ENCODE measurements at regions of chr6 and their contacts with region 1.

Region 1: GRCh38 chr6:156752666-156753301 is 24.4 kb upstream of the ARID1B start:
- DNase-seq: peak in 1 of 2 experiments; percentile 57
- H3K4me3 ChIP-seq: no peak overlapping the region
- H3K27ac ChIP-seq: no peak overlapping the region
- H3K4me1 ChIP-seq: peaks cover 0 to 3% (median 0%) of the 10 kb centered on the region in 4 experiments; a peak in 2 of 7 replicates
- H3K27me3 ChIP-seq: no peaks in the 10 kb centered on the region
- CTCF ChIP-seq: peak; percentile 54 to 77 (median 71)
- EP300 ChIP-seq: no peak
- POLR2A ChIP-seq: no peak
- RAD21 ChIP-seq: peak; percentile 52 to 67

Region 2: DNA sequence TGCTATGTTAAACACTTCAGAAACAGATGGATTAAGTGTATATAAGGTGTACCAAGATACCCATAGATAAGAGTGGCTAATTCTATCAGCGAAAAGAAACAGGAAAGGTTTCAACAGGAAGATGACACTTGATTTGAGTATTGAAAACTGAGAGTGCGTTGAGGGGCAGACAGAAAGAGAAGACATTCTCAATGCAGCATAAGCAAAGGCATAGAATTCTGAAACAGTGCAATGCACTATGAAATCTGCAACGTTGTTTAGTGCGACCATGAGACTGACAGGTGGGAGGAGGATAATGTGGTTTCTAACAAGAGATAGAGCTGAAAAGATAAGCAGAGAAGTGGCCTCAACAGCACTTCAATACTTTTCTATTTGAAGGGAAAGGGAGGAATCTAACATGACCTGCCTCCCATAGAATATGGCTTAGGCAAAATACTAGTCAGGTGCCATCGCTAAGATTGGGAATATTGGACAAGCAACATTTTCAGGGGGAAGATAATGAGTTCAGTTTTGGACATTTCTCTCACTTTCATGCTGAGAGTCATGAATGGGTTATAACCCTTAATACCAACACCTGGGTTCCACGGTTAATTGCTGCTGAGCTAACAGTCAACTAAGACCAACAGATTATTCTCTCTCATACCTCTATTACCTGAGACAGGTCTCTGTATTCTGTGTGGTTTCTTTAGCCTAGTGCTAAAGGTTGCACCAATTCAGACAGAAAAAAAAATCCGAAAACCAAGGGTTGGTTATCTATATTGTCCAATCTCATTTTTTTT is 288.5 kb before region 1 on chr6:
- CTCF ChIA-PET with region 1: no interaction called
- POLR2A ChIA-PET with region 1: no interaction called
- DNase-seq: no peak
- H3K4me3 ChIP-seq: no peak overlapping the region
- H3K27ac ChIP-seq: no peak overlapping the region
- H3K4me1 ChIP-seq: no peaks in the 10 kb centered on the region
- H3K27me3 ChIP-seq: no peaks in the 10 kb centered on the region
- CTCF ChIP-seq: no peak
- EP300 ChIP-seq: no peak
- POLR2A ChIP-seq: no peak
- RAD21 ChIP-seq: no peak

Region 3: DNA sequence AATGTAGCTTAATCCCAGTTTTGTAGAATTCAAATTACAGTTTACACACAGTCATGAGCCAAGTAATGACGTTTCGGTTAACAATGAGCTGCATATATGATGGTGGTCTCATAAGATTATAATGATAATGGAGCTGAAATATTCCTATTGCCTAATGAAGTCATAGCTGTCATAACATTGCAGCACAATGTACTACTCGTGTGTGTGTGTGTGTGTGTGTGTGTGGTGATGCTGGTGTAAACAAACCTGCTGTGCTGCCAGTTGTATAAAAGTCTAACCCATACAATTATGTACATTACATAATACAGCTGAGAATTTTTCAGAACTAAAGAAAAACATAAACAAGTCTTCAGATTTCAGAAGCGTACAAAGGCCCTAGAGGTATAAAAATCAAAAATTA is 42.3 kb before region 1 on chr6:
- CTCF ChIA-PET with region 1: no interaction called
- POLR2A ChIA-PET with region 1: no interaction called
- DNase-seq: no peak
- H3K4me3 ChIP-seq: no peak overlapping the region
- H3K27ac ChIP-seq: no peak overlapping the region
- H3K4me1 ChIP-seq: no peaks in the 10 kb centered on the region
- H3K27me3 ChIP-seq: no peaks in the 10 kb centered on the region; a peak in 1 of 7 replicates
- CTCF ChIP-seq: no peak
- EP300 ChIP-seq: no peak
- POLR2A ChIP-seq: no peak
- RAD21 ChIP-seq: no peak

Region 4: DNA sequence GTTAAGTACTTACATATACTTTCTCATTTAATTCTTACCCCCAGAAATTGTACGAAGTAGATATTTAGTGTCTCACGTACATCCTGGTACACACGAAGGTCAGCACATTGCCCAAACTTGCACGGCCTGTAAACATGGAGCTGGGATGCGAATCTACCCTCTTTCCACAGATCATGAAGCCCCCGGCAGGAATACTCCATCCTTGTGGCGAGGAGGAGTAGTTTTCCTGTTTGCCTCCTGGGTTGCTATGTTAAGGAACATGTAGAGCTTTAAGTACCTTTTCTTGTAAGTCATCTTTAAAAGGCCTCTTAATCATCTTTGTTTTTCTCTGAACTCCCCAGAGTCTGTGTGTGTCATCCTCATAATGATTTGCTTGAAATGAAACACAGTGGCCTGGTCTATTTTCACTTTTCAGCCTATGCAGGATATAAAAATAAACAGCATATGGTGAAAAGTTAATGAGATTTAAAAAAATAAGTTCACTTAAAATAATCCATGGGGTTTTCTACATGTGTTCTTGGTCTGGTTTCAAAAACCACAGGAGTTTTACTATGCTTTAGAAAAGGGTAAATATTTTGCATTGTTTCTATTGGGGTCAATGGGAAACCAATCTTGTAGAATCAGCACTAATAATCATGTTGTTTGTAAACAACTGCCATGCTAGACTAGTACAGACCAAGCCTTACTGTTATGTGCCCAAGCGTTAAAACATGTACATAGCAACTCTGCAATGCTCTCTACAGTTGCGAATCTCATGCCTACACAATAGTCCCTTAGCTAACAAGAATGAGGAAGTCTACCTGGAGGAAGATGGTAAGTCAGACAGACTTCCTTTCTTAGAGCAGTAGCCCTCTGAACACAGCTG is 15.1 kb after region 1 on chr6:
- CTCF ChIA-PET with region 1: interaction called, 23 read pairs
- POLR2A ChIA-PET with region 1: no interaction called
- DNase-seq: no peak
- H3K4me3 ChIP-seq: no peak overlapping the region
- H3K27ac ChIP-seq: no peak overlapping the region
- H3K4me1 ChIP-seq: peaks cover 0 to 2% (median under 1%) of the 10 kb centered on the region in 4 experiments; a peak in 4 of 7 replicates
- H3K27me3 ChIP-seq: no peaks in the 10 kb centered on the region; a peak in 1 of 7 replicates
- CTCF ChIP-seq: peak in 1 of 3 experiments; percentile 16; a peak in 1 of 4 replicates
- EP300 ChIP-seq: no peak
- POLR2A ChIP-seq: no peak
- RAD21 ChIP-seq: no peak; a peak in 1 of 4 replicates

Measured in H1 (cell line).